Caco-2 (cell line): ENCODE measurements at regions of chr6 and their contacts with region 1.

Region 1: DNA sequence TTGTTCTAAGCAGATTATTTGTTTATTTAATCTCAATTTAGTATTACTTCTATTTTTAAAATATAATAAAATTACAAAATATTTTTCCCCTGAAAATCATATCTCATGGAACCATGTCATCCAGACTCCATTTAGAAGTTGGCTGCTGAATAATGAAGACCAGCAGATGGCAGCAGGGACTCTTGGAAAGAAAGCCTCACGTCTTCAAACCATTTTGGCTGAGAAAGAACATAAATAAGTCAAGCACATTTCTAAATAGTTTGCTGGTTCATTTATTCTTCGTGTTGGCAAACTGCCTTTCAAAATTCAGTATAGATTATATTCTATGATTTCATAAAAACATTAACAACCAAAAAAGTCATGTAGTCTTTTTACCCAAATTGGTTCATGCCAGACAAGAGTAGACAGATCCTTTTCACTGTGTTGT is 71.7 kb downstream of the RCAN2 start:
- DNase-seq: peak; percentile 42 to 47
- H3K4me3 ChIP-seq: no peak overlapping the region
- H3K4me3 Mint-ChIP-seq: no peak overlapping the region
- H3K27ac Mint-ChIP-seq: no peak overlapping the region
- H3K4me1 ChIP-seq: no peaks in the 10 kb centered on the region
- H3K4me1 Mint-ChIP-seq: peaks cover 6% of the 10 kb centered on the region
- H3K27me3 ChIP-seq: no peaks in the 10 kb centered on the region
- H3K27me3 Mint-ChIP-seq: peaks cover 10% of the 10 kb centered on the region
- CTCF ChIP-seq: peak; percentile 67 to 81

Region 2: GRCh38 chr6:46491628-46492547 is 72.3 kb after region 1 on chr6:
- CTCF ChIA-PET with region 1: interaction called, 3 read pairs
- POLR2A ChIA-PET with region 1: no interaction called
- intact Hi-C with region 1: loop called (anchors 1 kb)
- DNase-seq: peak in 1 of 2 experiments; percentile 23
- H3K4me3 ChIP-seq: peak overlapping the region; percentile 44
- H3K4me3 Mint-ChIP-seq: peak overlapping the region; percentile 73
- H3K27ac Mint-ChIP-seq: no peak overlapping the region
- H3K4me1 ChIP-seq: peaks cover 9% of the 10 kb centered on the region; the same call in 1 of the 2 replicates
- H3K4me1 Mint-ChIP-seq: peaks cover 7% of the 10 kb centered on the region
- H3K27me3 ChIP-seq: no peaks in the 10 kb centered on the region; the same call in none of the 2 replicates
- H3K27me3 Mint-ChIP-seq: peaks cover 33% of the 10 kb centered on the region
- CTCF ChIP-seq: peak; percentile 16 to 67

Region 3: DNA sequence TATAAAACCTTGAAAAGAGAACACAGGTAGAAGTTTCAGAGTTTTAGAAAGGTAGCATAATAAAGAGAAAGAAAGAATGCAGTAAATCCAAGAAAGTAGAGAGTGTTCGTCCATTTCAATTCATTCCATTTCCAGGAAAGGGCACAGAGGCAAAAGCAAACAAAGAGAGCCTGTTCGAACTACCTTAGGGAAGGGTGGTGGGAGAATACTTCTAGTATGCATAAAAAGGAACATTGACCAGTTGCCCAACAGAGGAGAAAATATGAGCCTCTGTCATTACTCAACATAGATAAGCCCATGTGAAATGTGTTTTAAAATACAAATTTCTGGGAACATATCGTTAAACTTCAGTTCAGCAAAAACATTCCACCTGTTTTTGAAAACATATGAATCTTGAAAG is 172.5 kb after region 1 on chr6:
- CTCF ChIA-PET with region 1: no interaction called
- POLR2A ChIA-PET with region 1: no interaction called
- intact Hi-C with region 1: no loop called
- DNase-seq: no peak
- H3K4me3 ChIP-seq: no peak overlapping the region
- H3K4me3 Mint-ChIP-seq: no peak overlapping the region
- H3K27ac Mint-ChIP-seq: no peak overlapping the region
- H3K4me1 ChIP-seq: no peaks in the 10 kb centered on the region
- H3K4me1 Mint-ChIP-seq: no peaks in the 10 kb centered on the region
- H3K27me3 ChIP-seq: no peaks in the 10 kb centered on the region
- H3K27me3 Mint-ChIP-seq: peaks cover 2% of the 10 kb centered on the region
- CTCF ChIP-seq: no peak

Region 4: DNA sequence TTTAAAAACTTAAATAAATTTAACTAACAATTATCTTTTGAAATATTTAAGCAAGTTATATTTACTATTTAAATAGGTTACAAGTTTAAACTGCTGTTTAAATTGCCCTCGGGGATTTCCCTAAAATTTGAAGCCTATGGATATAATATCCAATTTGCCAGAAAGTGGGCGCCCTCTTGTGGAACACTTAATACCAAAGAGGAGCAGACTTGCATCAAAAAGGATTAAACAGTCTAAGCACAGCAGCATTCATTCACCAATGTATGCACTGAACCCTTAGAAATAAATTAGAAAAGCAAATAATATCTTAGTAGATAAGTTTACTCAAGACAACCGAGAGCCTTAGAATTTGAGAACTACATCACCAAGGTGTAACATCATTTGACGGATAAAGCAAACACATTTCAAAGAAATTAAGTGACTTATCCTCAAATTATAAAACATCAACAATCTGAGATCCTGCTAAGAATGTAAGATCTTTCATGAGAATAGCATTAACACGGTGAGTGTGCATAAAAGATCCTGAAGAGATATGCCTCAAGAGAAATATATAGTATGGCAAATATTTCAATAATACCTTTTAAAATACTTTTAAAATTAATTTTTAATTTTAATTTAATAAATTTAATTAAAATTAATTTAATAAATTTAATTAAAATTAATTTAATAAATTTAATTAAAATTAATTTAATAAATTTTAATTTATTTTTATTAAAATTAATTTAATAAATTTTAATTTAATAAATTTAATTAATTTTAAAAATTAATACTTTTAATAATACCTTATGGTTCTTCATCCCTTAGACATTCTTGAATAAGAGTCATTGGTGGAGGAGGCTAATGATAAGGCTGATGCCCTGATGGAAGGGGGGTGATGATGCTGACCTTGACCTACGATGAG is 362.1 kb after region 1 on chr6:
- CTCF ChIA-PET with region 1: no interaction called
- POLR2A ChIA-PET with region 1: no interaction called
- intact Hi-C with region 1: loop called (anchors 1 kb)
- DNase-seq: peak; percentile 48 to 68
- H3K4me3 ChIP-seq: no peak overlapping the region
- H3K4me3 Mint-ChIP-seq: no peak overlapping the region
- H3K27ac Mint-ChIP-seq: no peak overlapping the region
- H3K4me1 ChIP-seq: no peaks in the 10 kb centered on the region
- H3K4me1 Mint-ChIP-seq: peaks cover 7% of the 10 kb centered on the region
- H3K27me3 ChIP-seq: no peaks in the 10 kb centered on the region
- H3K27me3 Mint-ChIP-seq: no peaks in the 10 kb centered on the region
- CTCF ChIP-seq: peak; percentile 66 to 67

Region 5: DNA sequence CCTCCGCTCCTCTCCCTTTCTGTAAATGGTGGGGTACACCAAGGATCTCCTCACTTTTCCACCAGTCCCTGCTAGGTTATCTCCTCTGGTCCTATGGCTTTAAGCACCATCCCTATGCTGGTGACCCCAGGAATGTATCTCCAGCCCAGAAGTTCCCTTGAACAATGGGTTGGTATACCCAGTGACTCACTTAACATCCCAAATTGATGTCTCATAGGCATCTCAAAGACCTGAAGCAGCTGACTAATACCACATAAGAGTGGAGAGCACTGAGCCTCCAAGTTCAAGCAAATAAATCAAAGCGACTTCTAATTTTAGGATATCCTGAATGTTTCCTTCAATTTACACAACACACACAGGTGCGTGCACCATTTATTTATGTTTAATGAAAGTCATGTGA is 574.3 kb after region 1 on chr6:
- CTCF ChIA-PET with region 1: no interaction called
- POLR2A ChIA-PET with region 1: no interaction called
- intact Hi-C with region 1: loop called (anchors 1 kb)
- DNase-seq: no peak
- H3K4me3 ChIP-seq: no peak overlapping the region
- H3K4me3 Mint-ChIP-seq: no peak overlapping the region
- H3K27ac Mint-ChIP-seq: no peak overlapping the region
- H3K4me1 ChIP-seq: peaks cover 32% of the 10 kb centered on the region
- H3K4me1 Mint-ChIP-seq: peaks cover 25% of the 10 kb centered on the region
- H3K27me3 ChIP-seq: no peaks in the 10 kb centered on the region
- H3K27me3 Mint-ChIP-seq: no peaks in the 10 kb centered on the region
- CTCF ChIP-seq: no peak